ENCODE measurements at regions of chr6 and their contacts with region 1.

Region 1: GRCh38 chr6:138287144-138287955 is 69.1 kb upstream of the PBOV1 start:
- DNase-seq: peak; percentile 63
- ATAC-seq: peak; percentile 62
- H3K4me3 ChIP-seq: no peak overlapping the region
- H3K27ac ChIP-seq: no peak overlapping the region
- H3K4me1 ChIP-seq: peaks cover 11% of the 10 kb centered on the region
- H3K27me3 ChIP-seq: no peaks in the 10 kb centered on the region
- CTCF ChIP-seq: peak; percentile 75

Region 2: GRCh38 chr6:138001750-138002349 is 285.5 kb before region 1 on chr6:
- CTCF ChIA-PET with region 1: no interaction called
- POLR2A ChIA-PET with region 1: no interaction called
- intact Hi-C with region 1: loop called (anchors 10 kb)
- DNase-seq: peak; percentile 69
- ATAC-seq: no peak
- H3K4me3 ChIP-seq: no peak overlapping the region
- H3K27ac ChIP-seq: no peak overlapping the region
- H3K4me1 ChIP-seq: peaks cover 5% of the 10 kb centered on the region
- H3K27me3 ChIP-seq: no peaks in the 10 kb centered on the region
- CTCF ChIP-seq: peak; percentile 86

Region 3: GRCh38 chr6:138410972-138411667 is 123.8 kb after region 1 on chr6:
- CTCF ChIA-PET with region 1: no interaction called
- POLR2A ChIA-PET with region 1: no interaction called
- intact Hi-C with region 1: loop called (anchors 5 kb)
- DNase-seq: peak; percentile 91
- ATAC-seq: peak; percentile 93
- H3K4me3 ChIP-seq: no peak overlapping the region
- H3K27ac ChIP-seq: peak overlapping the region; percentile 91
- H3K4me1 ChIP-seq: peaks cover 26% of the 10 kb centered on the region
- H3K27me3 ChIP-seq: no peaks in the 10 kb centered on the region
- CTCF ChIP-seq: no peak